ENCODE measurements at regions of chr1 and their contacts with region 1.

Region 1: GRCh38 chr1:100132566-100133477 is at the starts of genes SASS6 and TRMT13:
- DNase-seq: peak; percentile 81
- ATAC-seq: peak; percentile 99
- H3K4me3 Mint-ChIP-seq: peak within 1 kb of the TSS; percentile 99
- H3K27ac Mint-ChIP-seq: peak within 1 kb of the TSS; percentile 94
- H3K4me1 Mint-ChIP-seq: peaks cover 35% of the 10 kb centered on the region
- H3K27me3 Mint-ChIP-seq: no peaks in the 10 kb centered on the region
- CTCF ChIP-seq: no peak
- total RNA-seq, gene SASS6: 5.5 and 5.9 TPM in 2 replicates
- total RNA-seq, gene TRMT13: 27.2 and 31.4 TPM in 2 replicates

Region 2: DNA sequence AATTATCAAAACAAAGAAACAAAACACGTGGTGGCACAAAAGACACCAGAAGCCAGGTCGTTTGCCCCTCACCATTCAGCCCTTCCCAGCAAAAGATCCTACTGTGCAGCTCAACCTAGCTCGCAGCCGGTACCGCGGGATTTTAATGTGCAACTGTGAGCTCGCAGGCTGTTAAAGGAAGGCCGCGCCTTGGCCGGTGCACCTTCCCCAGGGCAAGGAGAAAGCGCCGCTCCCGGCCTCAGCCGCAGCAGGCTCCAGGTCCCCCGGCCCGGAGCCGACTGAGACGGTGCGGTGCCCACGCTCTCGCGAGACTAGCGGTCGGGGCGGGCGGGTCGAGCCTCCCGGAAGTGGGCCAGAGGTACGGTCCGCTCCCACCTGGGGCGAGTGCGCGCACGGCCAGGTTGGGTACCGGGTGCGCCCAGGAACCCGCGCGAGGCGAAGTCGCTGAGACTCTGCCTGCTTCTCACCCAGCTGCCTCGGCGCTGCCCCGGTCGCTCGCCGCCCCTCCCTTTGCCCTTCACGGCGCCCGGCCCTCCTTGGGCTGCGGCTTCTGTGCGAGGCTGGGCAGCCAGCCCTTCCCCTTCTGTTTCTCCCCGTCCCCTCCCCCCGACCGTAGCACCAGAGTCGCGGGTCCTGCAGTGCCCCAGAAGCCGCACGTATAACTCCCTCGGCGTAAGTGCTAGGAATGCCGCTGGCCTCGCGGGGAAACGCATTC is 282.9 kb before region 1 on chr1 and contains the start of gene AGL:
- CTCF ChIA-PET with region 1: no interaction called
- POLR2A ChIA-PET with region 1: interaction called, 3 read pairs
- intact Hi-C with region 1: loop called (anchors 2 kb)
- DNase-seq: peak; percentile 82
- ATAC-seq: peak; percentile 95
- H3K4me3 Mint-ChIP-seq: peak within 1 kb of the TSS; percentile 97
- H3K27ac Mint-ChIP-seq: peak within 1 kb of the TSS; percentile 89
- H3K4me1 Mint-ChIP-seq: peaks cover 26% of the 10 kb centered on the region
- H3K27me3 Mint-ChIP-seq: no peaks in the 10 kb centered on the region
- CTCF ChIP-seq: no peak
- total RNA-seq, gene AGL: 19.6 and 21.8 TPM in 2 replicates

Region 3: DNA sequence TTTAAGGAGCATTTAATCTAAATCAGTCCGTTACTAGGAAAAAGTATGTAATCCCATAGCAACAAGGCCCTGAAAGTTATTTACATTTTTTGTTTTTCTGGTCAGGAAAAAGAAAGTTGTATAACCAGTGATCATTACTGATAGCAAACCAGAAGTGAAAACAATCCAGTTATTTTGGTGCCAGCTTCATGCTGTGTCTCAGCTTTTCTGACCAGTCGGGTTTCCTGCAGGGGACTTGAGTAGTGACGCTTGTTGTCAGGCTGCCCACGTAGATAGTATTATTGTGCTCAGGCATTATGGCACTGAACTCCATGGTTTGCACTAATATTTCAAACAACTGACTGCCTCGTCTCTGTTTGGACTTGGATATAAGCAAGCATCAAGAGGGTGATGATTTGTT is 55.3 kb before region 1 on chr1:
- CTCF ChIA-PET with region 1: no interaction called
- POLR2A ChIA-PET with region 1: no interaction called
- intact Hi-C with region 1: no loop called
- DNase-seq: no peak
- ATAC-seq: no peak
- H3K4me3 Mint-ChIP-seq: no peak overlapping the region
- H3K27ac Mint-ChIP-seq: peak overlapping the region; percentile 4
- H3K4me1 Mint-ChIP-seq: peaks cover 4% of the 10 kb centered on the region
- H3K27me3 Mint-ChIP-seq: no peaks in the 10 kb centered on the region
- CTCF ChIP-seq: no peak

Region 4: DNA sequence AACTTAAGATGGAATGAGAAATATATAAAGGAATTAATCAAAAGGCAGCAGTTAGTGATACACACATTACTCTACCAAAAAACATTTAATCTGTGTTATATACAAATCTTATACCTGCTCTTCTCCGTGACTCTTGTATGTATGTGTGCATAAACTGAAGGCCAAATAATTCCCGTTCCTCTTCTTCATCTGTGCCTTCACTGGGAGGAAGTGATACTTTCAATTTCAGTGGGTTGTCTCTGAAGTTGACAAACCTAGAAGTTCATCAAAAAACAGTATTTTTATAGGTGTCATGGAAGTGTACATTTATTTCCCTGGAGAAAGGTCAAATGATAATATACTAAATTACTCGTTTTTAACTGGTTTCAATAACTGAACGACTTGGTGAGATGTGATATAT is 19.4 kb after region 1 on chr1:
- CTCF ChIA-PET with region 1: no interaction called
- POLR2A ChIA-PET with region 1: no interaction called
- intact Hi-C with region 1: loop called (anchors 2 kb)
- DNase-seq: no peak
- ATAC-seq: peak; percentile 47
- H3K4me3 Mint-ChIP-seq: no peak overlapping the region
- H3K27ac Mint-ChIP-seq: peak overlapping the region; percentile 50
- H3K4me1 Mint-ChIP-seq: peaks cover 13% of the 10 kb centered on the region
- H3K27me3 Mint-ChIP-seq: no peaks in the 10 kb centered on the region
- CTCF ChIP-seq: no peak

Region 5: GRCh38 chr1:100249537-100250257 is 116.9 kb after region 1 on chr1 and contains the start of gene DBT:
- CTCF ChIA-PET with region 1: no interaction called
- POLR2A ChIA-PET with region 1: interaction called, 6 read pairs
- intact Hi-C with region 1: loop called (anchors 1 kb)
- DNase-seq: peak; percentile 77
- ATAC-seq: peak; percentile 100
- H3K4me3 Mint-ChIP-seq: no peak within 1 kb of the TSS
- H3K27ac Mint-ChIP-seq: no peak within 1 kb of the TSS
- H3K4me1 Mint-ChIP-seq: peaks cover 7% of the 10 kb centered on the region
- H3K27me3 Mint-ChIP-seq: no peaks in the 10 kb centered on the region
- CTCF ChIP-seq: no peak
- total RNA-seq, gene DBT: 9.8 and 11.6 TPM in 2 replicates

Region 6: GRCh38 chr1:100351095-100351891 is 218.5 kb after region 1 on chr1:
- CTCF ChIA-PET with region 1: no interaction called
- POLR2A ChIA-PET with region 1: interaction called, 6 read pairs
- intact Hi-C with region 1: loop called (anchors 1 kb)
- DNase-seq: peak; percentile 78
- ATAC-seq: peak; percentile 66
- H3K4me3 Mint-ChIP-seq: peak overlapping the region; percentile 99
- H3K27ac Mint-ChIP-seq: peak overlapping the region; percentile 96
- H3K4me1 Mint-ChIP-seq: peaks cover 35% of the 10 kb centered on the region
- H3K27me3 Mint-ChIP-seq: no peaks in the 10 kb centered on the region
- CTCF ChIP-seq: no peak